ENCODE measurements at regions of chr4 and their contacts with region 1.

Region 1: GRCh38 chr4:37812710-37813109 is 13.8 kb upstream of the PGM2 start:
- DNase-seq: no peak
- H3K4me3 ChIP-seq: no peak overlapping the region
- CTCF ChIP-seq: no peak
- POLR2A ChIP-seq: no peak

Region 2: GRCh38 chr4:38023347-38024205 is 210.9 kb after region 1 on chr4:
- intact Hi-C with region 1: loop called (anchors 10 kb)
- DNase-seq: no peak
- H3K4me3 ChIP-seq: no peak overlapping the region
- CTCF ChIP-seq: no peak
- POLR2A ChIP-seq: no peak

Region 3: DNA sequence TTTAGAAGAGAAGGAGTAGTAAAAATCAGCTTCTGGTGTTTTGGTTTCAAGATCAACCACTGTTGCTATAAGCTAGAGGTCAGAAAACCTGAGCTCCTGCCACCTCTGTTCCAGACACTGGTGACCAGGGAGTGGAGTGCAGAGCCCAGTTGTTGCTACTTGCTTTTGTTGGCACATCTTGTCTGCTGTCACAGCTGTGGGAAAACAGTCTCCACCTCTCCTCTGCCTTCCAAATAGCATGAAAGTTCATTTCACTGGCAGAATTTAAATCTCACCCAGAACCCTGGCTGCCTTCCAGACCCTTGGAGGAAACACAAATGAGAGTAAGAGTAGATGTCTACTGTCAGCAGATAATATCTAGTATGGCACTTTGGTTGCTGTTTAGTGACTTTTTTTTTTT is 553.7 kb after region 1 on chr4:
- intact Hi-C with region 1: no loop called
- DNase-seq: peak in 1 of 2 donors; percentile 30
- H3K4me3 ChIP-seq: no peak overlapping the region
- CTCF ChIP-seq: no peak
- POLR2A ChIP-seq: no peak